Caco-2 (cell line): ENCODE measurements at regions of chr2 and their contacts with region 1.

Region 1: GRCh38 chr2:113167115-113167932 is 6.4 kb upstream of the PSD4 start:
- DNase-seq: no peak
- H3K4me3 ChIP-seq: no peak overlapping the region
- H3K4me3 Mint-ChIP-seq: no peak overlapping the region
- H3K27ac Mint-ChIP-seq: no peak overlapping the region
- H3K4me1 ChIP-seq: peaks cover 8% of the 10 kb centered on the region; the same call in 1 of the 2 replicates
- H3K4me1 Mint-ChIP-seq: peaks cover 13% of the 10 kb centered on the region
- H3K27me3 ChIP-seq: no peaks in the 10 kb centered on the region
- H3K27me3 Mint-ChIP-seq: no peaks in the 10 kb centered on the region
- CTCF ChIP-seq: no peak

Region 2: DNA sequence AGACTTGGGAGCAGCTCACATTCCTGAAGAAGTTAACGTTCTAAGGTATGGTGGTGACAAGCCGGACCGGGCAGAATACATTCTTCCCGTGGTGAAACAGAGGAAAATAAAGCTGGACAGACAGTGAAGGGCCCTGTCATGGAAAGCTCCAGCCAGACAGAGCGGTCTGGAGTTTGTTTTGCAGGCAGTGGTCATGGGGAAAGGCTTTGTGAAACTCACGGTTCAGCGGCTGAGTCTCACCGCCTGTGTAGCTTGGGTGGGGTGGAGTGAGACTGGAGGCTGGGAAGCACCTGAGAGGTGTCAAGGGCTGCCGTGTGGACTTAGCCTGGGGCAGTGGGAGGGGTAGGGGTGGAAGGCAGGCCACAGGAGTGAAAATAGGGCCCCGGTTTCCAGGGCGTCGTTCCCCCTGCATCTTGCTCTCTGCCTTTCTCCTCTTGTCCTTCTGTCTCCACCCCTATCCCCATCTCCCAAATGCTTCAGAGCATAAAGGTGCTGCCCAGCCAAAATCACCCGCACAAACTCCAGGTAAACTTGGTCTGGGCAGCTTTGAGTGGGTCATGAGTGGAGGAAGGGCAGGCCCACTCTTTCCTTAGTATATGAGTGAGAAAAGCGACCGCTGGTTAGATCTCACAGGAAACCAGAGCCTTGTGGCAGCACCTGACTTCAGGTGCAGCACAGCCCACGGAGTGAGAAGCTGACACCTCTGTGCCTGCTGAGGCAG is 533.0 kb before region 1 on chr2:
- CTCF ChIA-PET with region 1: no interaction called
- POLR2A ChIA-PET with region 1: no interaction called
- intact Hi-C with region 1: loop called (anchors 5 kb)
- DNase-seq: peak in 1 of 2 experiments; percentile 22
- H3K4me3 ChIP-seq: no peak overlapping the region
- H3K4me3 Mint-ChIP-seq: no peak overlapping the region
- H3K27ac Mint-ChIP-seq: no peak overlapping the region
- H3K4me1 ChIP-seq: peaks cover 5% of the 10 kb centered on the region
- H3K4me1 Mint-ChIP-seq: peaks cover 13% of the 10 kb centered on the region
- H3K27me3 ChIP-seq: no peaks in the 10 kb centered on the region
- H3K27me3 Mint-ChIP-seq: no peaks in the 10 kb centered on the region
- CTCF ChIP-seq: no peak

Region 3: GRCh38 chr2:112947374-112947773 is 219.9 kb before region 1 on chr2:
- CTCF ChIA-PET with region 1: no interaction called
- POLR2A ChIA-PET with region 1: no interaction called
- intact Hi-C with region 1: no loop called
- DNase-seq: peak in 1 of 2 experiments; percentile 49
- H3K4me3 ChIP-seq: no peak overlapping the region
- H3K4me3 Mint-ChIP-seq: no peak overlapping the region
- H3K27ac Mint-ChIP-seq: no peak overlapping the region
- H3K4me1 ChIP-seq: 0 out of 2 replicates have a peak, but pooled peaks cover 3% of the 10 kb centered on the region
- H3K4me1 Mint-ChIP-seq: no peaks in the 10 kb centered on the region
- H3K27me3 ChIP-seq: no peaks in the 10 kb centered on the region
- H3K27me3 Mint-ChIP-seq: no peaks in the 10 kb centered on the region
- CTCF ChIP-seq: no peak

Region 4: DNA sequence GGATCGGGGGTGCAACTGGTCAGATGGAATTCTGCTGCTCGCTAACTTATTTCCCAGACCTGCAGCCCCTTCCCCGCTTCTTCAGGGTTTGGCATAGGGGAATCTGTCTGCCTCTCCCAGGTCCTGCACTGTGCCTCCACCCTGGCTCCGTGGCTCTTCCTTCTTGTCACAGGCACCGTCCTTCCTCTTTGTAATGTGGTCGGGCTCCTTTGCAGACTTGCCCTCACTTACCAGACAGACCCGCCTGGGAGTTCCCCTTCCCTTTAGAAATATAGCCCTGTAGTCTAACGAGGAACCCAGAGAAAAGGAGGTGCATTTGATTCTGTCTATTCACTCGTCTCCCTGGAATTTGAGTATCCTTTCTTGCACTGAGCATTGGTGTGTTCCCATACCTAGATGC is 175.3 kb after region 1 on chr2:
- CTCF ChIA-PET with region 1: no interaction called
- POLR2A ChIA-PET with region 1: no interaction called
- intact Hi-C with region 1: no loop called
- DNase-seq: no peak
- H3K4me3 ChIP-seq: no peak overlapping the region
- H3K4me3 Mint-ChIP-seq: no peak overlapping the region
- H3K27ac Mint-ChIP-seq: no peak overlapping the region
- H3K4me1 ChIP-seq: peaks cover 9% of the 10 kb centered on the region
- H3K4me1 Mint-ChIP-seq: peaks cover 4% of the 10 kb centered on the region
- H3K27me3 ChIP-seq: no peaks in the 10 kb centered on the region
- H3K27me3 Mint-ChIP-seq: no peaks in the 10 kb centered on the region
- CTCF ChIP-seq: no peak